Sigmoid colon (tissue), 7 donors: ENCODE measurements at regions of chr19 and their contacts with region 1.

Region 1: DNA sequence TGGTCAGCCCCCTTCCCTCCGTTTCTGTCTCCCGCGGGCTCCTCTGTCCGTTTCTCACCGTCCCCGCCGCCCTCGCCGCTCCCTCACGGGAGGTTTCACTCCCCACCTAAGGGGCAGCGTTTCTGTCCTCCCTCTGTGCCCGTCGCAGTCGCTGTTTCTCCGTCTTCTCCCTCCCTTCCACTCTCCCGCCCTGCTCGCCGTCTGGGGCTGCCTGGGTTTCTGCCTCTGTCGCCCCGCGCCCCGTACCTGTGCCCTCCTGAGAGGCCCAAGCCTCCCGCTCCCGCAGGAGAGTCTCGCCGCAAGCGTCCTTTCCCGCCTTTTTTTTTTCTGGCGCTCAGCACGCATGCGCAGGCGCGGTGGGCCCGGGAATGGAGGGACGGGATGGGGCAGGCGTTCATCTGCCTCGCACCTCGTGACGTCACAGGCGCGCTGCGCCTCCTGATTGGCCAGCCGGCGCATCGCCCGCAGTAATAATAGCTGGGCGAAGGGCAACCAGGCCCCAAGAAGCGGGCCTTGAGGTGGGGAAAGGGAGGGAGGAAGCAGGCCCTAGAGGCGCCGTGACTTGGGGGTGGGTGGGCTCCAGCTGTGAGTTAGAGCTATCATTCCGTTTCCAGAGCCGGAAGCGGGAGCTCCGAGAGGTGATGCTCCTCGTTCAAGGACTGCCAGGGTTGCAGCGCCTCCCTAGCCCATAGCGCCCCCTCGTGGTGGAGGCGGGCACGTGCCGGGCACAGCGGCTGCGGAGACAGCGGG is 15.4 kb downstream of the SSC5D start:
- DNase-seq: peak; percentile 97
- H3K4me3 ChIP-seq: peak overlapping the region; percentile 34 to 54 (median 46)
- H3K27ac ChIP-seq: peak overlapping the region; percentile 78 to 89 (median 89)
- H3K4me1 ChIP-seq: peaks cover 0 to 19% (median 10%) of the 10 kb centered on the region in 4 donors
- H3K27me3 ChIP-seq: no peaks in the 10 kb centered on the region
- CTCF ChIP-seq: peak; percentile 98 to 99 (median 99)
- EP300 ChIP-seq: no peak
- POLR2A ChIP-seq: no peak

Region 2: GRCh38 chr19:55146078-55146704 is 357.5 kb before region 1 on chr19:
- intact Hi-C with region 1: loop called (anchors 5 kb)
- DNase-seq: no peak
- H3K4me3 ChIP-seq: no peak overlapping the region
- H3K27ac ChIP-seq: no peak overlapping the region
- H3K4me1 ChIP-seq: peaks cover 0 to 16% (median 5%) of the 10 kb centered on the region in 4 donors
- H3K27me3 ChIP-seq: peaks cover 32 to 99% (median 91%) of the 10 kb centered on the region in 3 donors
- CTCF ChIP-seq: no peak
- EP300 ChIP-seq: no peak
- POLR2A ChIP-seq: no peak

Region 3: GRCh38 chr19:55407800-55408532 is 95.7 kb before region 1 on chr19:
- intact Hi-C with region 1: loop called (anchors 10 kb)
- DNase-seq: peak; percentile 100
- H3K4me3 ChIP-seq: peak overlapping the region; percentile 82 to 99 (median 89)
- H3K27ac ChIP-seq: peak overlapping the region; percentile 96 to 100 (median 98)
- H3K4me1 ChIP-seq: peaks cover 0 to 22% (median 20%) of the 10 kb centered on the region in 4 donors
- H3K27me3 ChIP-seq: no peaks in the 10 kb centered on the region
- CTCF ChIP-seq: no peak
- EP300 ChIP-seq: peak in 1 of 4 donors; percentile 36
- POLR2A ChIP-seq: peak; percentile 31 to 59

Region 4: DNA sequence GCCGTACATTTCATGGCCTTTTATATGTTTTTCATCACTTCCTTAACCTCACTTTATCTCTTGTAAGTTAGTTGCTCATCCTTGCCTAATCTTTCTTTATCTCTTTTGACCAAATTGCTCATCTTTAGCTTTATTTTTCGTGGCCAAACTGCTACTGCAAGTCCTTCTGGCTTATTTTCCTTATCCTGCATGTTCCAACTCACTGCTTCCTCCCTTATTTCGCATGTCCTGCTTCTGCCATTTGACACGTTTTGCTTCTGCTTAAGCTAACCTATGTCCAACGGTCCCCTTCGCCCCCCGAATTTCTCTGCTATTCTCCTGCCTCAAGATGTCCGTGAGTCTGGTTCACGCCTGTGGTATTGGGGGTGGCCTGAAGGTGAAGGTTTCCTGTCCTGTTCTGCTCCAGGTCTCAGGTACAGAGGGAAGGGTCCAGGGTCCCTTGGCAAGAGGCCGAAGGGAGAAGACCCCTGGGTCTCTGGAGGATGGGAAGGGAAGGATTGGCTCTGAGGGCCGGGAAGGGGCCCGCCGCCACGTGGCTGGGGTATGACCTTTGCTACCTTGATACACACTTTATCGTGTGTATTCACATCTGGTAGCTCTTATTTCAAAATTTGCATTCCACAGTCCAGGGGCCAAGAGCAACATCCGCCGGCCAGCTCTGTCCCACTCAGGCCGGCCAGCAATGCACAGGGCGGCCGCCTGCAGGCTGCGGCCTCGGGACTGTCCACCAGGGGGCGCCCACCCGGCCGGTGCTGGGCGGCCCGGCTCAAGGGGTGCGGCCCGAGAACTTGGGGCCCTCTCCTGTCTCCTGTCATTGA is 36.2 kb before region 1 on chr19:
- intact Hi-C with region 1: loop called (anchors 1 kb)
- DNase-seq: peak; percentile 84
- H3K4me3 ChIP-seq: no peak overlapping the region
- H3K27ac ChIP-seq: peak overlapping the region in 1 of 4 donors; percentile 36
- H3K4me1 ChIP-seq: peaks cover 0 to 9% (median 4%) of the 10 kb centered on the region in 4 donors
- H3K27me3 ChIP-seq: no peaks in the 10 kb centered on the region
- CTCF ChIP-seq: peak; percentile 91 to 99 (median 94)
- EP300 ChIP-seq: peak in 1 of 4 donors; percentile 30
- POLR2A ChIP-seq: no peak

Region 5: GRCh38 chr19:55563261-55563690 is 59.6 kb after region 1 on chr19:
- intact Hi-C with region 1: no loop called
- DNase-seq: no peak
- H3K4me3 ChIP-seq: no peak overlapping the region
- H3K27ac ChIP-seq: no peak overlapping the region
- H3K4me1 ChIP-seq: no peaks in the 10 kb centered on the region
- H3K27me3 ChIP-seq: peaks cover 0 to 38% (median 11%) of the 10 kb centered on the region in 3 donors
- CTCF ChIP-seq: no peak
- EP300 ChIP-seq: no peak
- POLR2A ChIP-seq: no peak